ENCODE measurements at regions of chr3 and their contacts with region 1.

Region 1: GRCh38 chr3:43503067-43503728 is 118.6 kb downstream of the ANO10 start:
- DNase-seq: peak; percentile 45 to 60 (median 53)
- H3K4me3 ChIP-seq: no peak overlapping the region
- H3K27ac ChIP-seq: no peak overlapping the region
- H3K4me1 ChIP-seq: peaks cover 0 to 15% (median 9%) of the 10 kb centered on the region in 4 experiments
- H3K27me3 ChIP-seq: no peaks in the 10 kb centered on the region

Region 2: GRCh38 chr3:42572278-42572677 is 930.9 kb before region 1 on chr3:
- CTCF ChIA-PET with region 1: no interaction called
- POLR2A ChIA-PET with region 1: no interaction called
- DNase-seq: peak; percentile 15 to 25 (median 22)
- H3K4me3 ChIP-seq: no peak overlapping the region
- H3K27ac ChIP-seq: no peak overlapping the region
- H3K4me1 ChIP-seq: no peaks in the 10 kb centered on the region
- H3K27me3 ChIP-seq: no peaks in the 10 kb centered on the region

Region 3: DNA sequence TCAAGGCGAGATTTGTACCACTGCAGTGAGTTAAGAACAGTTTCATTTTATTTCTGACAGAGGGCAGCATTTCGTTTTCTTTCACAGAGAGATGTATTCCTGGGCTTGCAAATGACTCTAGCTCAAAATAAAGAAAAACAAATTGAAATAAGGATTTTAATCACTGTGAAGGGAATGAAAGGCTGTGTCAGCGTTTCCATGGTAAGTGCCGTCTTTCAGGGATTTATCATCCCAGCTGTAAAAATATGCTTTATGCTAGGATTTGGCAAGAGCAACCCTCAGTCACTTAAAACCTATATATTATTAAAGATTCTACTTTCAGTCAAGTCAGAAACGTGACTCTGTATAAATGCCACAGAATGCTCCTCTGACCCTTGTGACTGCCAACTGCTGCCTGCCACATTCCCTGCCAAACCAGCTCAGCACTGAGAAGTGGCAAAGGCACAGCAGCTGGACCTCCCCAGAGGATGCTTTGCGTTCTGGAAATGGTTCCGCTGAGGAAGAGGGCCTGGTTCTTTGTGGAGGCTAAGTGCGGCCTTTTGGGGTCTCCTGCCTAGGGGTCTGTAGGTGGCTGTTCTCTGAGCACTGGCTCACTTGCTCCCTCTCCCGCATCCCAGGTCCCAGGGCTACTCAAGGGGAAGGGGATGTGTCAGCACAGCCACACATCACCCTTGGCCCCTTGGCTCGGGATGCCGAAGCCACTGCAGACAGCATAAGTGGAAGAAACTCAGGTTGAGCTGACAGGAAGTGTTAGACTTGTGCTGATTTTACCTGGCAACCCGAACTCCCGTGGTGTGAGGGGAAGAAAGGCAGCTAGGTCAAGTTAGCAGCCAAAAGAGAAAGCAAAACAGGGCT is 340.7 kb before region 1 on chr3:
- CTCF ChIA-PET with region 1: interaction called, 22 read pairs
- POLR2A ChIA-PET with region 1: no interaction called
- DNase-seq: peak; percentile 48 to 69 (median 66)
- H3K4me3 ChIP-seq: peak overlapping the region in 2 of 7 experiments; percentile 19 to 23
- H3K27ac ChIP-seq: no peak overlapping the region
- H3K4me1 ChIP-seq: peaks cover 0 to 13% (median 6%) of the 10 kb centered on the region in 4 experiments
- H3K27me3 ChIP-seq: no peaks in the 10 kb centered on the region

Region 4: GRCh38 chr3:43223670-43224364 is 279.4 kb before region 1 on chr3:
- CTCF ChIA-PET with region 1: interaction called, 35 read pairs
- POLR2A ChIA-PET with region 1: no interaction called
- DNase-seq: peak; percentile 38 to 70 (median 63)
- H3K4me3 ChIP-seq: no peak overlapping the region
- H3K27ac ChIP-seq: no peak overlapping the region
- H3K4me1 ChIP-seq: no peaks in the 10 kb centered on the region
- H3K27me3 ChIP-seq: no peaks in the 10 kb centered on the region

Region 5: GRCh38 chr3:43243590-43244587 is 259.3 kb before region 1 on chr3:
- CTCF ChIA-PET with region 1: interaction called, 10 read pairs
- POLR2A ChIA-PET with region 1: no interaction called
- DNase-seq: peak; percentile 51 to 91 (median 90)
- H3K4me3 ChIP-seq: peak overlapping the region in 3 of 7 experiments; percentile 17 to 46 (median 22)
- H3K27ac ChIP-seq: peak overlapping the region in 1 of 2 experiments; percentile 41
- H3K4me1 ChIP-seq: peaks cover 18 to 58% (median 31%) of the 10 kb centered on the region in 4 experiments
- H3K27me3 ChIP-seq: no peaks in the 10 kb centered on the region

Region 6: GRCh38 chr3:43432462-43432861 is 70.7 kb before region 1 on chr3:
- CTCF ChIA-PET with region 1: no interaction called
- POLR2A ChIA-PET with region 1: no interaction called
- DNase-seq: no peak
- H3K4me3 ChIP-seq: no peak overlapping the region
- H3K27ac ChIP-seq: no peak overlapping the region
- H3K4me1 ChIP-seq: no peaks in the 10 kb centered on the region
- H3K27me3 ChIP-seq: no peaks in the 10 kb centered on the region

Region 7: DNA sequence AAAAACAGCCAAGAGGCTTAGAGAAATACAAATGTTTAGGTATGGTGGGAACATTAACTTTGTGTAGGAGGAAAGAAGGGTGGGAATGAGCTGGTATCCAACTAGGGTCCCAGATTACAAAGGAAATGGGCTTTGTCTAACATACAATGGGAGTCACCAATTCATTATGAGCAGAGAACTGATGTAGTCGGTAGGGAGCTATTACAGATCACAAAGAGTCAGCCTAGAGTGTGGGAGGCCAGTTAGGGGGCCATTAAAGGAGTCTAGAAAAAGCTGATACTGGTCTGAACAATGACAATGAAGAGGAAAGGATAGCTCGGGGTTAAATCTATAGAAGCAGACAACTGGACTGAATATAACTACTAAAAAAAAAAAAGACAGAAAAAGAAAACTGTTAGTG is 103.1 kb after region 1 on chr3:
- CTCF ChIA-PET with region 1: no interaction called
- POLR2A ChIA-PET with region 1: no interaction called
- DNase-seq: no peak
- H3K4me3 ChIP-seq: no peak overlapping the region
- H3K27ac ChIP-seq: no peak overlapping the region
- H3K4me1 ChIP-seq: peaks cover 0 to 4% (median under 1%) of the 10 kb centered on the region in 4 experiments
- H3K27me3 ChIP-seq: no peaks in the 10 kb centered on the region

Measured in common myeloid progenitor, CD34-positive (primary cell).